Body of pancreas (tissue), 4 donors: ENCODE measurements at regions of chr19 and their contacts with region 1.

Region 1: GRCh38 chr19:23872282-23872919 is 42.3 kb upstream of the ZNF726 start:
- DNase-seq: no peak
- ATAC-seq: no peak
- H3K4me3 ChIP-seq: no peak overlapping the region
- H3K27ac ChIP-seq: no peak overlapping the region
- H3K4me1 ChIP-seq: no peaks in the 10 kb centered on the region
- H3K27me3 ChIP-seq: no peaks in the 10 kb centered on the region
- CTCF ChIP-seq: no peak
- POLR2A ChIP-seq: no peak

Region 2: GRCh38 chr19:23969630-23970029 is 97.2 kb after region 1 on chr19:
- intact Hi-C with region 1: loop called (anchors 5 kb)
- DNase-seq: no peak
- ATAC-seq: no peak
- H3K4me3 ChIP-seq: no peak overlapping the region
- H3K27ac ChIP-seq: no peak overlapping the region
- H3K4me1 ChIP-seq: peaks cover 4% of the 10 kb centered on the region
- H3K27me3 ChIP-seq: peaks cover 0 to 4% of the 10 kb centered on the region in 2 donors
- CTCF ChIP-seq: no peak
- POLR2A ChIP-seq: no peak